ENCODE measurements at regions of chr6 and their contacts with region 1.

Region 1: GRCh38 chr6:100099189-100100074 is 105.4 kb upstream of the MCHR2 start:
- DNase-seq: no peak

Region 2: DNA sequence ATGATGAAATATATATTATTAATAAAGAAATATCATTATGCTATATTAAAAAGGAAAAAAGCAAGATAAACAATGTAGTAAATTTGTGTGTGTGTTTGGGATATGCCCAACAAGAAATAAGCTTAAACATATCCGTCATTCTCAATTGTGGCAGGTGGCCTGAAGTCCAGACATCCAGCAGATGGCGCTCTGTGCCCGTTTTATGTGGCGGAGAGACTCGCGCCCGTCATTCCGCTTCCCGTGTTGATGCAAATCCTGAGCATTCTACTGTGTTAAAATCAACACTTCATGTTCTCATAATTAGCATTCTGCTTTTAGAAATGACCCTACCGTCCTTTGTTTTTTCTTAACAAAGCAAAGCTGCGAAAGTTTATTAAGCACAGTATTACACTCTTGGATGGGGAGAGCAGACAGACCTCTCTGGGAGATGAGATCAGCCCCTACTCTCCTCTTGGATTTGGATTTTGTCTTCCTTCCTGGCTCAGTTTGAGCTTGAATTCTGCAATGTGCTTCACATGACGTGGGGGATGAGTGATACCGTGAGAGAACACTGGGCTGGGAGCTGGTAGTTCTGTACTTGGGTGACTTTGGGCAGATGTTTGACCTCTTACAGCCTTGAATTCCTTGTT is 231.2 kb before region 1 on chr6:
- intact Hi-C with region 1: loop called (anchors 5 kb)
- DNase-seq: peak; percentile 65 to 94 (median 85)

Region 3: GRCh38 chr6:100001915-100002388 is 97.5 kb before region 1 on chr6:
- intact Hi-C with region 1: loop called (anchors 5 kb)
- DNase-seq: peak in 41 of 42 donors; percentile 43 to 87 (median 74)

Measured in head of caudate nucleus (tissue), 42 donors.